ENCODE measurements at regions of chr1 and their contacts with region 1.

Region 1: GRCh38 chr1:167542109-167543032 is 11.2 kb downstream of the CREG1 start:
- DNase-seq: no peak
- ATAC-seq: peak; percentile 64
- H3K4me3 Mint-ChIP-seq: no peak overlapping the region
- H3K27ac Mint-ChIP-seq: peak overlapping the region; percentile 10
- H3K4me1 Mint-ChIP-seq: peaks cover 37% of the 10 kb centered on the region
- H3K27me3 Mint-ChIP-seq: no peaks in the 10 kb centered on the region

Region 2: DNA sequence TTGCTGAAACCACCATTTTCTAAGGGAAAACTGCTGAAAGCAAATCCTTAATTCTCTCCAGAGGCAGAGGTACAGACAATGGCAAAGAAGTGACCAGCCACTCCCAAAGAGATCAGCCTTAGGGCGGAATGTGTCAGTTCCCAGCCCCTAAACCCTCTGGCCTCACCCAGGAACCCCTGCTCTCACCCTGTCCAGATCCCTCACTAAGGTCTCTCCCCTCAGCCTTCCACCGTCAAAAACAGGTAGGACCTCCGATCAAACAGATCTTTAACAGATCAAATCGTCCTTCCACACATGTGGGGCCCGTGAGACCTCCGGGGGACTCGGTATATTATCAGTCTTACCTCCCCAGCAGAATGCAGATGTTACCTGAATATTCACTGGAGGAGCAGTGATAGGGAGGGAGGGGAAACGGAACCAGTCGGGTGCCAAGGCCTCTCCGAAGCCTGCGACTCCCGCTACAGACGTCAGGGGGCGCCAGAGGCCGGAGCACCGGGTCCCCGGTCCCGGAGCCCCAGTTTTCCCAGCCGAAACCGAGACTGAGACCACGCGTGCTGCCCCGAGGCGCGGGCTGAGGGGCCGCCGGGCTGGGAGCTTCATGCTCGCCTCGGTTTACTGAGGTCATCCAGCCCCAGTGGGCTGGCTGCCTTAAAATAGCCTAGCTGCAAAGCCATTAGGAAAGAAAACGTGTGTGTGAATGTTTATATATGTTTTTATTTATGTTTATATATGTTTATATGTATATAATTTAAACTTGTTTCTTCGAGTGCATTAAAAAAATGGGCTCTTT is 475.8 kb before region 1 on chr1:
- CTCF ChIA-PET with region 1: interaction called, 5 read pairs
- POLR2A ChIA-PET with region 1: no interaction called
- intact Hi-C with region 1: loop called in 1 of 2 experiments (anchors 1 kb)
- DNase-seq: peak; percentile 87
- ATAC-seq: peak; percentile 95
- H3K4me3 Mint-ChIP-seq: no peak overlapping the region
- H3K27ac Mint-ChIP-seq: no peak overlapping the region
- H3K4me1 Mint-ChIP-seq: no peaks in the 10 kb centered on the region
- H3K27me3 Mint-ChIP-seq: no peaks in the 10 kb centered on the region

Region 3: DNA sequence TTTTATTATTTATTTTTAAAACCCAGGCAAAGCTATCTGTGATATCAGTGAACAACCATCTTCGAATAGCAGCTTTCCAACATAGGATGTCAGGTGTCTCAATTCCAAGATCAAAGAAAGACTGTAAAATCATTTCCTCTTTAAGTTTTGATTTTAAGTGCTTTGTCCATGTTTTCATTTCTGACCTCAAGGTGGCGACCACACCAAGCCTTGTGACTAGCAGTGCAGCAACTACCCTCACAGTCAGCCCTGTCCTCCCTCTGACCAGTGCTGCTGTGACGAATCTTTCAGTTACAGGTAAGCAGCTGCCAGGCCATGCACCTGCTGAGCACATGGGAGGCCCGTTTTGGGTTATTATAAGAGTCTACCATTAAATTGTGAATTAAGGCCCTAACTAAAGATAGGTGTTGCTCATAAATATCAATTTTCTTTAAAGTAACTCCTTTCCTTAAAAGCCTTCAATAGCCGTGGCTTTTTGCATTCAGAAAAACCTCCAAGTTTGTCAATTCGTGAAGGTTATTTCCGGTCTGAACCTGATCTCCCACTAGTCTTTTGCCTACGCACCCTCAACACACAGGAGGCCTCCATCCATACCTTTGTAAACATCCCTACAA is 141.0 kb before region 1 on chr1:
- CTCF ChIA-PET with region 1: interaction called, 16 read pairs
- POLR2A ChIA-PET with region 1: no interaction called
- intact Hi-C with region 1: no loop called
- DNase-seq: peak; percentile 64
- ATAC-seq: peak; percentile 71
- H3K4me3 Mint-ChIP-seq: no peak overlapping the region
- H3K27ac Mint-ChIP-seq: no peak overlapping the region
- H3K4me1 Mint-ChIP-seq: no peaks in the 10 kb centered on the region
- H3K27me3 Mint-ChIP-seq: no peaks in the 10 kb centered on the region

Region 4: DNA sequence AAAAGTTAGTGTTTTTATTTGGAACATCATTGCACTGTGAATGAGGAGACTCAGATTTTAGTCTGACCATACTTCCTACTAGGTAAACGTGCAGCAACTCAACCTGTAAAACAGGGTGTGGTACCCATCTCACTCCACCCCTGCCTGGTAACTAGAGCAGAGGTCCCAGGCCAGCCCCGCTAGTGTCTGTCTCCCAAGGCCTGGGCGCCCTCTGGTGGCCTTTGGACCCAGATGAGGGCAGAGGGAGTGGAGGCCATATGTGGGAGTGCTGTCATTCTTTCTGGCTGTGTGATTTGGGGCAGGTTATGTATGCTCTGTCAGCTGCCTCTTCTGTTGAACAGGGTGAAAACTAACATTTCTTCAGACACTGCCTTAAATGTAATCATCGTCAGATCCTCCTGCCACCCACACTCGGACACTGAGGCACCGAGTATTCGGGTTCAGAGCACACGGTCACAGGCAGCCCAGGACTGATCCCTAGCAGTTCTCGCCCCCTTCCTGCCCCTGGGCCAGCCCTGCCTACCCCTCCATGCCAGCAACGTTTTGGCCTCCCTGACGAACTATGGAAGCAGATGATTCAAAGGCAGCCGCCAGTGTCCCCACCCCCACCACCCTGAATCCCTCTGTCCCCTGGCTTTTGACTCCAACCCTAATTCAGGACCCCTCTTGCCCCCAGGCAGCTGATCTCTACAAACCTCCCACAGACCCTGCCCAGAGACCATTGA is 100.1 kb before region 1 on chr1:
- CTCF ChIA-PET with region 1: interaction called, 15 read pairs
- POLR2A ChIA-PET with region 1: no interaction called
- intact Hi-C with region 1: no loop called
- DNase-seq: peak; percentile 94
- ATAC-seq: peak; percentile 80
- H3K4me3 Mint-ChIP-seq: no peak overlapping the region
- H3K27ac Mint-ChIP-seq: peak overlapping the region; percentile 68
- H3K4me1 Mint-ChIP-seq: peaks cover 84% of the 10 kb centered on the region
- H3K27me3 Mint-ChIP-seq: no peaks in the 10 kb centered on the region

Region 5: DNA sequence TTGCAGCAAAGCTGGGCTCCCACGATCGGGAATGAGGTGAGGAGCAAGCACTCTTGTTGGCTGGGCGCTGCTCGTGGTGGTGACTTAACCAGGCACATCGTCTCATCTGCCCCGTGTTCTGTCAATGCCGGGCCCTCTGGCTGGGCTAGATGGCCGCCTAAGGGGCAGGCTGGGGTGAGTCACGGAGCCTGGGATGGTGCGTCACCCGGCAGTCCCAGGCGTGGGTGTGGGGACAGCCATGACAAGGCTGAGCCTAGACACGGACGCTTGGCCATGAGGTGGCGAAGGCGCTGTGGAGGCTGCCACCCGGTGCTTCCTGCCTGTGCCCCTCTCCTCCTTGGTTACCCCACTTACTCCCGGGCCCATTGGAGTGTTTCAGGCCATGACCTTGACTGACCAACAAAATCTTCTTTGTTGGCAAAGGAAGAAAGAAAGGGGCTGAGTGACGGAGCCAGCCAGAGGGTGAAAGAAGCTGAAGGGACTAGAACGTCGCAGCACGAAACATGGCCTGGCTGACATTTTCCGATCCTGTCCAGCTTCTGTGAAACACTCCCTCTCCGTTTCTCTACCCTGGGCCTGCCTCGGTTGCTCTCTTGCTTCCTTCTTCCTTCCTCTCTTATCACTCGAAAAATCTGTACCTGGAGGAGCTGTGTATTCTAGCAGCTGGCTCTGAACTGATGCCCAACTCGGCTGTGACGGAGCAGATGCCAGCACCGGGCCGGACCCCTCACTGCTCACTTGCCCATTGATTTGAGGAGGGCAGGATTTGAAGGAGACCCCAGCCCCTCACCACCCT is 24.6 kb before region 1 on chr1:
- CTCF ChIA-PET with region 1: interaction called, 36 read pairs
- POLR2A ChIA-PET with region 1: no interaction called
- intact Hi-C with region 1: no loop called
- DNase-seq: peak; percentile 97
- ATAC-seq: peak; percentile 88
- H3K4me3 Mint-ChIP-seq: peak overlapping the region; percentile 90
- H3K27ac Mint-ChIP-seq: peak overlapping the region; percentile 99
- H3K4me1 Mint-ChIP-seq: peaks cover 43% of the 10 kb centered on the region
- H3K27me3 Mint-ChIP-seq: no peaks in the 10 kb centered on the region